CD8-positive, alpha-beta T cell (primary cell): ENCODE measurements at regions of chr5 and their contacts with region 1.

Region 1: GRCh38 chr5:156762771-156763170 is 87.3 kb upstream of the PPP1R2B start:
- DNase-seq: no peak
- ATAC-seq: no peak
- H3K4me3 ChIP-seq: no peak overlapping the region
- H3K4me3 Mint-ChIP-seq: no peak overlapping the region
- H3K27ac ChIP-seq: no peak overlapping the region
- H3K27ac Mint-ChIP-seq: no peak overlapping the region
- H3K4me1 ChIP-seq: no peaks in the 10 kb centered on the region
- H3K4me1 Mint-ChIP-seq: no peaks in the 10 kb centered on the region
- H3K27me3 ChIP-seq: no peaks in the 10 kb centered on the region
- H3K27me3 Mint-ChIP-seq: peaks cover 4% of the 10 kb centered on the region
- CTCF ChIP-seq: no peak

Region 2: DNA sequence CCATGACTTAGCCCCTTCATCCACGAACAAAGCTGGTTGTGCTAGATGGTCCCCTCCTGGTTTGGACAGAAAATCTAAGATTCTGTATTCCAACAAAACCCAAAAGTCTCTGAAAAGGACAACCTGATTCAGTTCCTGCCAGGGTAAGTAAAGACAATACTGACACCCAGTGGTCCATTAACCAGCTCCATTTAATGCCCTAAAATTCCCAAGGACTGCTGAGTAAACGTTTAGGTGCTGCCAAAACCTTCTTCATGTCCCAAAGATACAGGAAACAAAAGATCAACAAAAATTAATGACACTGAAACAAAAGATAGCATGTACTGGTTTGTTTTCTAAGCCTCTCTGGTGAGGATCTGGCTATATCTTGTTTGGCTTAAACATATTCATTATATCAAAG is 62.0 kb after region 1 on chr5:
- CTCF ChIA-PET with region 1: no interaction called
- POLR2A ChIA-PET with region 1: interaction called, 10 read pairs
- intact Hi-C with region 1: no loop called
- DNase-seq: no peak
- ATAC-seq: no peak
- H3K4me3 ChIP-seq: no peak overlapping the region
- H3K4me3 Mint-ChIP-seq: no peak overlapping the region
- H3K27ac ChIP-seq: no peak overlapping the region
- H3K27ac Mint-ChIP-seq: no peak overlapping the region
- H3K4me1 ChIP-seq: no peaks in the 10 kb centered on the region
- H3K4me1 Mint-ChIP-seq: no peaks in the 10 kb centered on the region
- H3K27me3 ChIP-seq: peaks cover 3% of the 10 kb centered on the region in 2 experiments
- H3K27me3 Mint-ChIP-seq: peaks cover 3% of the 10 kb centered on the region
- CTCF ChIP-seq: no peak